CD4-positive, alpha-beta memory T cell (primary cell): ENCODE measurements at regions of chr17 and their contacts with region 1.

Region 1: DNA sequence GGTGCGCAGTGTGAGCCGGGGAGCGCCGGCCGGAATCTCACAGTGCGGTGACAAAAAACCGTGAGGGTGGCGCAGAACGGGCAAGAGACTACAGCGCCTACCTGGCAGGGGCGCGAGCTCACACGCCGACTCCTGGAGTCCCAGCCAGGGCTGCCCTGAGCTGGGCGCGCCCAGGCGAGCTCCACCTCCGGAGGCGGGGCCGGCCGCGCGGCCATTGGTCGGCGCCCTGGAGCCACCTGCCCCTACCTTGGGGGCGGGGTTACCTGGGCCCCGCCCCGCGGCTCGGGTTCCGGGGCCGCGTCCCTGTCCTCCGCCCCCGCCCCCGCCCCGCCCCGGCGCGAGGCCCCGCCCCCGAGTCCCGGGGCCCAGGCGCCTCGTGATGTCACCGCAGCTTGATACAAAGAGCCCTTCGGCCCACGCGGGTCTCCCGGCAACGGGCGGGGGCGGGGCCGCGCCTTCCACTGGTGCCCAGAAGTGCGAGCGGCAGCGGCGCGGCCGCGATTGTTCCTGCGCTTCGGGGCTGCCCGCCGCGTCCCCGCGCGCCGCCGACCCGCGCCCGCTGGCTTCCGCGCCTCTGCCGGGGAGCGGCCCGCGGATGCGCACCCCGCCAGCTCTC is 96.3 kb downstream of the RAB11FIP4 start:
- DNase-seq: peak; percentile 93 to 96 (median 93)
- H3K4me3 ChIP-seq: peak overlapping the region; percentile 68 to 73
- H3K4me3 Mint-ChIP-seq: peak overlapping the region; percentile 85 to 95 (median 89)
- H3K27ac ChIP-seq: peak overlapping the region; percentile 79
- H3K27ac Mint-ChIP-seq: peak overlapping the region; percentile 91 to 97 (median 95)
- H3K4me1 ChIP-seq: peaks cover 48% of the 10 kb centered on the region
- H3K4me1 Mint-ChIP-seq: peaks cover 37 to 52% (median 46%) of the 10 kb centered on the region in 4 donors
- H3K27me3 ChIP-seq: no peaks in the 10 kb centered on the region
- H3K27me3 Mint-ChIP-seq: no peaks in the 10 kb centered on the region

Region 2: GRCh38 chr17:30677550-30678249 is 810.1 kb before region 1 on chr17:
- CTCF ChIA-PET with region 1: no interaction called
- POLR2A ChIA-PET with region 1: no interaction called
- intact Hi-C with region 1: no loop called
- DNase-seq: no peak
- H3K4me3 ChIP-seq: no peak overlapping the region
- H3K4me3 Mint-ChIP-seq: no peak overlapping the region
- H3K27ac ChIP-seq: no peak overlapping the region
- H3K27ac Mint-ChIP-seq: no peak overlapping the region
- H3K4me1 ChIP-seq: no peaks in the 10 kb centered on the region
- H3K4me1 Mint-ChIP-seq: no peaks in the 10 kb centered on the region
- H3K27me3 ChIP-seq: no peaks in the 10 kb centered on the region
- H3K27me3 Mint-ChIP-seq: no peaks in the 10 kb centered on the region

Region 3: DNA sequence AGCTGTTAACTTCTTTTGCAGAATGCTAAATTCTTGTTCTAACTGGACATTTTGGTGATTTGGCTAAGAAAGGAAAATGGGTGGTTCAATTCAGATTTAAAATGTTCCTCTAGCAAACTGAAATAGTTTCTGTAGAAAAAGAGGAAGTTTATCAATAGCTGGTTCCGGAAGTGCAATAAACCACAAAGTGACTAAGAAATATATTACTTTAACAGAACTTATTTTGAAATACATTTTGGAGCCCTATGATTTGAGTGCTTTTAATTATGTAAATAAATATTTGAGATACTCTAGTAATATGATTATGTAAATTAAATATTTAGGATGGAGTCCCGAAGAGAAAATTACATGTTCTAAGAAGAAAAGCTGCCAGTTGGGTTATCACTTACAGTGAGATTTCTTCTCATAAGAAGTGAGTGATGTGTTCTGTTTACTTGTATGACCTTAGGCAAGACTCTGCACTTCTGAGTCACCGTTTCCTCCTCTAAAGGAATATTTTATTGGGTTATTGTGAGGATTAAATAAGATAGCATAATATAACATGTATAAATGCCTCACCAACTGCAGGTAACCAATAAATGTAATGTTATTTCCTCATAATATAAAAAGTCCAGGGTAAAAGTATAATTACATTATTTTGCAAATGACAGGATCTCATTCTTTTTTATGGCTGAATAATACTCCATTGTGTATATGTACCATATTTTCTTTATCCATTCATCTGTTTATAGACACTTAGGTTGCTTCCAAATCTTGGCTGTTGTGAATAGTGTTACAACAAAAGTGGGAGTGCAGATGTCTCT is 173.6 kb before region 1 on chr17 and contains the start of gene EVI2B:
- CTCF ChIA-PET with region 1: no interaction called
- POLR2A ChIA-PET with region 1: interaction called, 8 read pairs
- intact Hi-C with region 1: loop called (anchors 5 kb)
- DNase-seq: peak; percentile 59 to 75 (median 62)
- H3K4me3 ChIP-seq: peak within 1 kb of the TSS; percentile 59 to 60
- H3K4me3 Mint-ChIP-seq: peak within 1 kb of the TSS; percentile 88 to 97 (median 94)
- H3K27ac ChIP-seq: peak within 1 kb of the TSS; percentile 66
- H3K27ac Mint-ChIP-seq: peak within 1 kb of the TSS; percentile 88 to 97 (median 90)
- H3K4me1 ChIP-seq: peaks cover 49% of the 10 kb centered on the region
- H3K4me1 Mint-ChIP-seq: peaks cover 23 to 70% (median 36%) of the 10 kb centered on the region in 4 donors
- H3K27me3 ChIP-seq: no peaks in the 10 kb centered on the region
- H3K27me3 Mint-ChIP-seq: no peaks in the 10 kb centered on the region
- total RNA-seq, gene EVI2B: 174 to 176 TPM

Region 4: GRCh38 chr17:31321481-31321880 is 166.3 kb before region 1 on chr17 and contains the start of gene EVI2A:
- CTCF ChIA-PET with region 1: no interaction called
- POLR2A ChIA-PET with region 1: interaction called, 18 read pairs
- intact Hi-C with region 1: no loop called
- DNase-seq: peak; percentile 83 to 96 (median 88)
- H3K4me3 ChIP-seq: peak within 1 kb of the TSS; percentile 87 to 92
- H3K4me3 Mint-ChIP-seq: peak within 1 kb of the TSS; percentile 80 to 95 (median 90)
- H3K27ac ChIP-seq: peak within 1 kb of the TSS; percentile 73
- H3K27ac Mint-ChIP-seq: peak within 1 kb of the TSS; percentile 91 to 98 (median 95)
- H3K4me1 ChIP-seq: peaks cover 24% of the 10 kb centered on the region
- H3K4me1 Mint-ChIP-seq: peaks cover 19 to 45% (median 26%) of the 10 kb centered on the region in 4 donors
- H3K27me3 ChIP-seq: no peaks in the 10 kb centered on the region
- H3K27me3 Mint-ChIP-seq: no peaks in the 10 kb centered on the region
- total RNA-seq, gene EVI2A: 133 to 139 TPM

Region 5: DNA sequence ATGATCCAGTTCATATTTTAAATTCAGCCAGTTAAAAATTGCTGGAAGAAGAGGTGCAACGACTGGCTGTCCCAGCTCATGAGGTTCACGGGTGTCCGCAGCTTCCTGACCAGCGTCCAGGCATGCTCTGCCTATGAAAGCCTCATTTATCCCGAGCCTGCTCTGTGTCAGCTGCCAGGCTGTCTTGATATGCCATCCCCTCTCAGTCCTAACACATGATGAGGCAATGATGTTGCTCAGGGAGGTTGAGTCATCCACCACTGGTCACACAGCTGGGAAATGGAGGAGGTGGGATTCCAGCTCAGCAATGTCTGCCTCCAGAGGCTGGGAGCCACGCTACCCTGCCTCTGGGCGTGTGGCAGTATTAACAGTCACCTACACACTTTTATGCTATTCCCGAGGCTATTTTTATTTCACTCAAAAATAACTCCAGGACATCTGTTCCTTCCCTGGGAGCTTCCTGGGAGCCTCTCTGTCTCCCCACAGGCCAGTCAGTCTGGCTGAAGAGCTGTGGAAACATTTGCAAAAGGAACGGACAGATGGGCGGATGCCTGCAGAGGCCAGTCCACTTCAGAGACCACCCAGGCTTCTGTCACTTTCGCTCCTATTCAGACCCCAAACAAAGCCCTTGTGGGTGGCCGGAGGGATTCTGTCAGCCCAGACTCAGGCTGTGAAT is 73.7 kb before region 1 on chr17:
- CTCF ChIA-PET with region 1: no interaction called
- POLR2A ChIA-PET with region 1: no interaction called
- intact Hi-C with region 1: no loop called
- DNase-seq: no peak
- H3K4me3 ChIP-seq: no peak overlapping the region
- H3K4me3 Mint-ChIP-seq: no peak overlapping the region
- H3K27ac ChIP-seq: no peak overlapping the region
- H3K27ac Mint-ChIP-seq: no peak overlapping the region
- H3K4me1 ChIP-seq: no peaks in the 10 kb centered on the region
- H3K4me1 Mint-ChIP-seq: no peaks in the 10 kb centered on the region
- H3K27me3 ChIP-seq: no peaks in the 10 kb centered on the region
- H3K27me3 Mint-ChIP-seq: no peaks in the 10 kb centered on the region

Region 6: GRCh38 chr17:31499771-31500554 is 12.2 kb after region 1 on chr17:
- CTCF ChIA-PET with region 1: interaction called, 3 read pairs
- POLR2A ChIA-PET with region 1: interaction called, 15 read pairs
- intact Hi-C with region 1: no loop called
- DNase-seq: no peak
- H3K4me3 ChIP-seq: no peak overlapping the region
- H3K4me3 Mint-ChIP-seq: no peak overlapping the region
- H3K27ac ChIP-seq: no peak overlapping the region
- H3K27ac Mint-ChIP-seq: peak overlapping the region in 2 of 7 donors; percentile 9 to 57
- H3K4me1 ChIP-seq: peaks cover 50% of the 10 kb centered on the region
- H3K4me1 Mint-ChIP-seq: peaks cover 17 to 61% (median 36%) of the 10 kb centered on the region in 4 donors
- H3K27me3 ChIP-seq: no peaks in the 10 kb centered on the region
- H3K27me3 Mint-ChIP-seq: no peaks in the 10 kb centered on the region

Region 7: GRCh38 chr17:31508288-31509094 is 20.7 kb after region 1 on chr17:
- CTCF ChIA-PET with region 1: interaction called, 51 read pairs
- POLR2A ChIA-PET with region 1: interaction called, 332 read pairs
- intact Hi-C with region 1: loop called (anchors 1 kb)
- DNase-seq: peak; percentile 80 to 91 (median 85)
- H3K4me3 ChIP-seq: peak overlapping the region; percentile 42 to 72
- H3K4me3 Mint-ChIP-seq: peak overlapping the region; percentile 87 to 98 (median 94)
- H3K27ac ChIP-seq: peak overlapping the region; percentile 72
- H3K27ac Mint-ChIP-seq: peak overlapping the region; percentile 95 to 99 (median 98)
- H3K4me1 ChIP-seq: peaks cover 58% of the 10 kb centered on the region
- H3K4me1 Mint-ChIP-seq: peaks cover 39 to 73% (median 54%) of the 10 kb centered on the region in 4 donors
- H3K27me3 ChIP-seq: no peaks in the 10 kb centered on the region
- H3K27me3 Mint-ChIP-seq: no peaks in the 10 kb centered on the region

Region 8: GRCh38 chr17:31549525-31550388 is 62.0 kb after region 1 on chr17:
- CTCF ChIA-PET with region 1: no interaction called
- POLR2A ChIA-PET with region 1: interaction called, 14 read pairs
- intact Hi-C with region 1: loop called (anchors 1 kb)
- DNase-seq: peak; percentile 83 to 87 (median 85)
- H3K4me3 ChIP-seq: peak overlapping the region; percentile 47 to 81
- H3K4me3 Mint-ChIP-seq: peak overlapping the region; percentile 83 to 91 (median 90)
- H3K27ac ChIP-seq: peak overlapping the region; percentile 62
- H3K27ac Mint-ChIP-seq: peak overlapping the region; percentile 23 to 91 (median 84)
- H3K4me1 ChIP-seq: peaks cover 7% of the 10 kb centered on the region
- H3K4me1 Mint-ChIP-seq: peaks cover 10 to 39% (median 14%) of the 10 kb centered on the region in 4 donors
- H3K27me3 ChIP-seq: no peaks in the 10 kb centered on the region
- H3K27me3 Mint-ChIP-seq: no peaks in the 10 kb centered on the region

Region 9: DNA sequence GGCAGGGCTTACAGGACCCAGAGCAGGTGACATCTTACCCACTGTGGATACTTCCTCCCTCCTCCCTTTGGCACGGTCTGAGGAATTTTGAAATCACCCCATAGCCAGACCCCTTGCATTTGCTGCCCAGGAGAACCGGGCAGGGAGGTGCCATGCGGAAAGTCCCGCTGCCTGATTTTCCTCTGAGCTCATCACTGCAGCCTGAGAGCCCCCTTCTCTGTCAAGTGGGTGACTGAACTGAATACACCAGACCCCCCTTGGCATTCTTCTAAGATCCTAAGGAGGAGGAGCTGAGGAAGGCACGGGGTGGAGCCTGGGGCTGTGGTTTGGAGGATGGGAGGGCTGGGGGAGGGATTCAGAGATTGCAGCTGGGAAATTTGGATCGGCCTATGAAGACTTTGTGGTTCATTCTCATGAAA is 77.1 kb after region 1 on chr17:
- CTCF ChIA-PET with region 1: no interaction called
- POLR2A ChIA-PET with region 1: no interaction called
- intact Hi-C with region 1: no loop called
- DNase-seq: no peak
- H3K4me3 ChIP-seq: no peak overlapping the region
- H3K4me3 Mint-ChIP-seq: no peak overlapping the region
- H3K27ac ChIP-seq: no peak overlapping the region
- H3K27ac Mint-ChIP-seq: no peak overlapping the region
- H3K4me1 ChIP-seq: no peaks in the 10 kb centered on the region
- H3K4me1 Mint-ChIP-seq: peaks cover 0 to 12% (median 4%) of the 10 kb centered on the region in 4 donors
- H3K27me3 ChIP-seq: no peaks in the 10 kb centered on the region
- H3K27me3 Mint-ChIP-seq: peaks cover 3 to 8% of the 10 kb centered on the region in 2 donors

Region 10: DNA sequence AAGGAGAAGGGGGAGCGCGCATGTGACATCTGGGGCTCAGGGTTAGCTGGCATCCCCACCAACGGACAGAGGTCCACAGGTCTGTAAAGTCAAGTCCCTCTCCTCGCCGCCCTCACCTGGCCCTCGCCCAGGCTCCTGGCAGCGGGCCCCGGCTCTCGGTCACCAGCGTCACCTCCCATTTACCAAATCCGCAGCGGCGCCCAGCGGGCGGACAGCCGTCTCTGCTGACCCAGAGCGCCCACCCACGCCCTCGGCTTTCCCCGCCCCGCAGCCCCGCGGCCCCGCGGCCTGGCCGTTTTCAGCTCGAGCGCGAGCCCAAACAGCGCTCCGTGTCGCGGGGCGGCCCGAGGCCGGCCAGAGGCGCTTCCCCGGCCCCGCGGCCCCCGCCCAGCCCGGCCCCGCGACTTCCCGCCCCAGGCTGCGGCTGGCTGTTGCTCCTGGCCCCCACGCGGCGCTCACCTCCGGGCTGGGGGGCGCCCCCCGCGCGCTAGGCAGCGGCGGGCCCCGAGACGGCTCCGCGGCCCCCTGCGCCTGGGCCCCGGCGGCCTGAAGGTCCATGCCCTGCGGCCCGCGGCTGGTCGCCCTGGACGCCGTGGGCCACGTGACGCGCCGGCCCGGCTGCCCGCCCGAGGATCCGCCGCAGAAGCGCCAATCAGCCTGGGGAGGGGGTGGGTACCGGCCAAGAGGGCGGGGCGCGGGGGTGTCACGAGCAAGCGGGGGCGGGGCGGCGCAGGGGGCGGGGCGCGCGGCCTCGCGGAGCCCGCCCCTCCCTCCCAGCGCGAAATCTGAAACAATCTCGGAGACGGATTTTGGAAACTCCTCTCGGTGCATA is 371.1 kb after region 1 on chr17 and contains the start of gene COPRS:
- CTCF ChIA-PET with region 1: no interaction called
- POLR2A ChIA-PET with region 1: no interaction called
- intact Hi-C with region 1: loop called (anchors 5 kb)
- DNase-seq: peak; percentile 71 to 78 (median 74)
- H3K4me3 ChIP-seq: peak within 1 kb of the TSS in 1 of 2 donors; percentile 65
- H3K4me3 Mint-ChIP-seq: peak within 1 kb of the TSS; percentile 85 to 91 (median 87)
- H3K27ac ChIP-seq: peak within 1 kb of the TSS; percentile 26
- H3K27ac Mint-ChIP-seq: peak within 1 kb of the TSS; percentile 29 to 89 (median 79)
- H3K4me1 ChIP-seq: peaks cover 14% of the 10 kb centered on the region
- H3K4me1 Mint-ChIP-seq: peaks cover 12 to 22% (median 14%) of the 10 kb centered on the region in 4 donors
- H3K27me3 ChIP-seq: no peaks in the 10 kb centered on the region
- H3K27me3 Mint-ChIP-seq: no peaks in the 10 kb centered on the region
- total RNA-seq, gene COPRS: 3.3 to 3.6 TPM